Activated T-helper 2 cell treated with anti-CD3 and anti-CD28 coated beads, Interferon-gamma antibody, Interleukin-2, Interleukin-4, amounts not matched to agents 10 μg/mL and 5 μg/mL and 100 μg/mL, durations not matched to agents 14 hours and 24 hours and 36 hours (primary cell): ENCODE measurements at regions of chr9 and their contacts with region 1.

Region 1: DNA sequence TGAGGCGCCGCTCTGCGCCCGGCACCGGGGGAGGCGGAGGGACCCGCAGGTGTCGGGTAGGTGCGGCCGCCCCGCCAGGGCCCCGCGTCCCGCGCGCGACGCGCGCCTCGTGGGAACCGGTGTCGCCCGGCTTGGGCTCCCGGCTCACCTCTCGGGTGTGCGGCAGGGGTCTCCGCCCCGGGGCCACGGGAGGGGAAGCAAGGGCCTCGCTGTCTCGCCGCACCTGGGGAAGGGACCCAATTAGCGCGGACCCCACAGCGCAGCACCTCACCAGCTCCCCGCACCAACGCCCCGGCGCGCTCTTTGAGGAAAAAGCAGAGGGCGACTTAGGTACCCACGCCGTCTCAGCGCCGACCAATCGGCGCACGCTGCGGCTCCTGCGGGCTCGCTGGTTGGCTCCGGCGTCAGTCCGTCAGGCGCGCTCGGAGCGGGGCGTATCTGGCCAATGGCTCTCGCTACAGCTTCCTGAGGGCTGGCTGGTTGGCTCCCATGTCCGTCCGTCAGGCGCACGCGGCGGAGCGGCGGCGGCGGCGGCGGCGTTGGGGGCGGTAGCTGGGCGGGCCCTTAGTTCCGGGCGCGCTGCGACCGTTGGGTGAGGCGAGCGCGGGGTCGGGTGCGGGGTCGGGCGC is at the start of gene TRAF2:
- DNase-seq: peak; percentile 99
- H3K4me3 Mint-ChIP-seq: peak within 1 kb of the TSS; percentile 97
- H3K27ac Mint-ChIP-seq: peak within 1 kb of the TSS; percentile 87
- H3K4me1 Mint-ChIP-seq: peaks cover 30% of the 10 kb centered on the region
- H3K27me3 Mint-ChIP-seq: no peaks in the 10 kb centered on the region
- total RNA-seq, gene TRAF2: 59.5 and 60.4 TPM in 2 replicates

Region 2: GRCh38 chr9:136865735-136866103 is 20.3 kb before region 1 on chr9:
- intact Hi-C with region 1: loop called (anchors 1 kb)
- DNase-seq: no peak
- H3K4me3 Mint-ChIP-seq: peak overlapping the region; percentile 86
- H3K27ac Mint-ChIP-seq: peak overlapping the region; percentile 63
- H3K4me1 Mint-ChIP-seq: peaks cover 9% of the 10 kb centered on the region
- H3K27me3 Mint-ChIP-seq: no peaks in the 10 kb centered on the region

Region 3: DNA sequence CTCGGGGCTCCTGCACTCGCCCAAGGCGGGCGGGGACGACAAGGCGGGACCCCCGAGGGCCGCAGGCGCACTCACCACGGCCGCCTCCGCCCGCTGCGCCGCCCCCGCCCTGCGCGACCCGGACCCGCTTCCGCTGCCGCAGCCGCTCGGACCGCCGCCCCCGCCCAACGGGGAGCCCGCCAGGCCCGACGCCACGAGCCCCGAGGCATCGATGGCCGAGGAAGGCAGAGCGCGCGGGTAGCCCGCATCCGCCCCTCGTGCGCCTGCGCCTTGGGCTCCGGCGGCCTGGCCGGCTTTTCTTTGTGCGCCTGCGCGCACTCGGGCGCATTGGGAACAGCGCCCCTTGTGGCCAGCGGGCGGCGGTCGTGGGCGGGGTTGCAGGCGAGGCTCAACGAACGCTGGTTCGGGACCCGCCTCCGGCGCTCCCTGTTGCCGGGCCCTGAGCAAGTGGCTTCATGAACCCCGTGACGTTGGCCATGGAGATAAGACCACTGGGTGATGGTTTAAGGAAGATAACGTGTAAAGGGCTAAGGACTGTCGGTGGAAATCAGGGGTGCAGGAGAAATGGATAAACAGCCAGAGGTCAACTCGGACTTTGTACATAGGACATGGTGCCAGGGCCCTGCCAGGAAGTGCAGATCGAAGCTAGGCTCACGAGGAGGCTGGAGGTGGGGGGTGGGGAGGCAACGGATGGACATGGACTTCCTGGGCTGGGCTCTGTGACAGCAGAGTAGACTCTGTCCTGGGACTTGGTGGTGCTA is 58.6 kb after region 1 on chr9 and contains the starts of genes C8G and FBXW5:
- intact Hi-C with region 1: loop called (anchors 2 kb)
- DNase-seq: peak; percentile 95
- H3K4me3 Mint-ChIP-seq: peak within 1 kb of the TSS; percentile 79
- H3K27ac Mint-ChIP-seq: peak within 1 kb of the TSS; percentile 82
- H3K4me1 Mint-ChIP-seq: peaks cover 3% of the 10 kb centered on the region
- H3K27me3 Mint-ChIP-seq: no peaks in the 10 kb centered on the region
- total RNA-seq, gene C8G: 0.76 and 0.89 TPM in 2 replicates
- total RNA-seq, gene FBXW5: 94.4 and 95.9 TPM in 2 replicates

Region 4: DNA sequence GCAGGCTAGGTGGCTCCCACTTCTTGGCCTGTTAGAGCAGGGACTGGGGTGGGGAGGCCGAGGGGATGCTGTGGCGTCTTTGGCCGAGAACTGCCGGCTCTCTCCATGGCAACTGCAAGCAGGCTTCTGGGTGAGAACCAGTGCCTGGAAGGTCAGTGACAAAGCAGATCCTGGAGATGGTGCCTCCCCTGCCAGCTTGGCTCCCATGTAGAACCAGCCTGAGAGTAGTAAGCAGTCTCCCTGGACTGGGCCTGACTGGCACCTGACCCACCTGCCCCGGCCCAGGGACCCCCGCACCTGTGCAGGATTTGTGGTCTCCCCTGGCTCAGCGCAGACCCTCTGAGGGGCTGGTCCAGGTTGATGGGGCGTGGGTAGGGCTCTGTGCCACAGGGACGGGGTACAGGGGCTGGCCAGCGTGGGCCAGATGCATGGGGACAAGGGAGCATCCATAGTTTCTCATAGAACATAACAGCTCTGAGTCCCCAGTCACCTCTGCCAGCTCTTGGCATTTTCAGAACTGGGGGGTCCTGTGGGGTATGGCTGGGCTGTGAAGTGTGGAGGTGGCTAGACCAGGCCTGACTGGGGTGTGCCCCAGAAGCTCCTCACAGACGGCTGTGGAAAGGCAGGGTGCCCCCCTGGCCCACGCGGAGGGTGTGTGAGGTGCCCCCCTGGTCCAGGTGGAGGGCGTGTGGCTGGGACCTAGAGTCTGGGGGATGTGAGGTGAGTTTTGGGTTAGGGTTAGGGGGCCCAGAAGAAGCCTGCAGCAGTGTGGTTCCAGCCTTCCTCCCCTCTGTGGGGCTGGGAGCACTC is 1013.7 kb after region 1 on chr9:
- intact Hi-C with region 1: no loop called
- DNase-seq: no peak
- H3K4me3 Mint-ChIP-seq: no peak overlapping the region
- H3K27ac Mint-ChIP-seq: no peak overlapping the region
- H3K4me1 Mint-ChIP-seq: no peaks in the 10 kb centered on the region
- H3K27me3 Mint-ChIP-seq: no peaks in the 10 kb centered on the region